GM12878 (cell line): ENCODE measurements at regions of chr1 and their contacts with region 1.

Region 1: GRCh38 chr1:234970731-234971476 is 157.7 kb downstream of the TOMM20 start:
- DNase-seq: no peak
- ATAC-seq: peak; percentile 72
- H3K4me3 ChIP-seq: no peak overlapping the region
- H3K27ac ChIP-seq: peak overlapping the region; percentile 95
- H3K4me1 ChIP-seq: peaks cover 60% of the 10 kb centered on the region
- H3K27me3 ChIP-seq: no peaks in the 10 kb centered on the region
- CTCF ChIP-seq: no peak
- EP300 ChIP-seq: peak in 1 of 2 experiments; percentile 87; a peak in 2 of 4 replicates
- POLR2A ChIP-seq: peak; percentile 31; the same call in 1 of the 2 replicates
- RAD21 ChIP-seq: 0 out of 2 replicates have a peak, but pooled peaks have one; percentile 4

Region 2: DNA sequence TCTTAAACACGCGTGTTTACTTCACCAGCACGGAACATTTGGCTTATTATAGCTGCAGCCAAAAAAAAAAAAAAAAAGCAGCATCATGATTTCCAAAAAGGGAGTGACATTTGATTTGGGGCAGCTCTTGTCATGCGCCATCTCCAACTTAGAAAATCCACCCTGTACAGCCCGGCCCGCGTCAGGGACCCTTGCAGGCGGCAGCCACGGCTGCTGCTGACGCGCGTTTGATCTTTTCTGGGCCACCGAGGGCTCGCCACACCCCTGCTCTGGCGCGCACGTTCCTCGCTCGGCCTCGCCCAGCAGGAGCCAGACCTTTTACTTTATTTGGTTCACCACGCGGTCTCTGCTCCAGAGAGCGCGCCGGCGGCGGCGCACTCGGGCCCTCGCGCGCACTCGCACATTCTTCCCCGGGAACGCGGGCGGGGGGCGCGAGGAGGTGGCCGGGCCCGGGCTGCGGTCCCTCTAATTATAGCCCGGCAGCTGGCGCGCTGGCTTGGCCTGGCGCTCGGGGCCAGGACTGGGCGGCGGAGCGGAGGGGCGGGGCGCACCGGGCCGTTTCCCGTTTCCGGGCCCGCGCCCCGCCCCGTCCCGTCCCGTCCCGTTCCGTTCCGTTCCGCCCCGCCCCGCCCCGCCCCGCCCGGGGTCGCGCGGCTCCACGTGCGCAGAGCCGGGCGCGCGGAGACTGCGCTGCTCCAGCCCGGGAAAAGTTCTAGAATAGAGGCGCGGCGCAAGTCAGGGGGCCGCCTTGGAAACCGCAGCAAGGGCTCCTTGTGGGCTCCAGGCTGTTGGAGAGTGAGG is 371.1 kb before region 1 on chr1:
- CTCF ChIA-PET with region 1: interaction called, 4 read pairs
- POLR2A ChIA-PET with region 1: interaction called, 3 read pairs
- RAD21 ChIA-PET with region 1: interaction called, 10 read pairs
- SMC1A ChIA-PET with region 1: interaction called, 11 read pairs
- in situ Hi-C with region 1: loop called (anchors 10 kb)
- intact Hi-C with region 1: loop called (anchors 5 kb)
- DNase-seq: no peak
- ATAC-seq: peak; percentile 76
- H3K4me3 ChIP-seq: peak overlapping the region; percentile 67; the same call in 1 of the 2 replicates
- H3K27ac ChIP-seq: peak overlapping the region; percentile 75
- H3K4me1 ChIP-seq: peaks cover 22% of the 10 kb centered on the region
- H3K27me3 ChIP-seq: no peaks in the 10 kb centered on the region
- CTCF ChIP-seq: 0 out of 6 replicates have a peak, but pooled peaks of 1 of the 3 experiments have one; percentile 5
- EP300 ChIP-seq: 0 out of 4 replicates have a peak, but pooled peaks of 1 of the 2 experiments have one; percentile 42
- POLR2A ChIP-seq: peak; percentile 70; the same call in 1 of the 2 replicates
- RAD21 ChIP-seq: no peak

Region 3: DNA sequence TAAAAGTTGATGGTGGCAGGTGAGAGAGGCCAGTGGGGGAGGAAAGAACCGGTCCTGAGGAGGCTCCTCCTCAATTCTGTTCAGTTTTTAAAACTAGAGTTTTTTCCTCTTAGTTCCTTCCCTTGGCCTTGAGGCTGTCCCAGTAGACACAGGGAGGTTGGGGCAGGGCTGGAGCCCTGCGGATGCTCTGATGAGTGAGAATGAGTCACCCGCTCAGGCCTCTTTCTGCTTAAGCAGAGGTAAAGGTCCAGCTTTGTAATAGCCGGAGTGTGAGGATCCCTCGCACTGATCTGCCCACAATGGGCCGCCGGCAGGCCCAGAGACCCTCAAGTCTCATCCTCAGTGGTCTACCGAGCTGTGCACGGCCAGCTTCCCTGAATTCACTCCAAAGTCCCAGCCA is 311.4 kb before region 1 on chr1:
- CTCF ChIA-PET with region 1: no interaction called
- POLR2A ChIA-PET with region 1: no interaction called
- RAD21 ChIA-PET with region 1: no interaction called
- SMC1A ChIA-PET with region 1: no interaction called
- in situ Hi-C with region 1: no loop called
- intact Hi-C with region 1: no loop called
- DNase-seq: no peak
- ATAC-seq: no peak
- H3K4me3 ChIP-seq: no peak overlapping the region
- H3K27ac ChIP-seq: no peak overlapping the region
- H3K4me1 ChIP-seq: peaks cover 11% of the 10 kb centered on the region
- H3K27me3 ChIP-seq: no peaks in the 10 kb centered on the region; a peak in 1 of 4 replicates
- CTCF ChIP-seq: no peak
- EP300 ChIP-seq: no peak
- POLR2A ChIP-seq: no peak
- RAD21 ChIP-seq: no peak

Region 4: DNA sequence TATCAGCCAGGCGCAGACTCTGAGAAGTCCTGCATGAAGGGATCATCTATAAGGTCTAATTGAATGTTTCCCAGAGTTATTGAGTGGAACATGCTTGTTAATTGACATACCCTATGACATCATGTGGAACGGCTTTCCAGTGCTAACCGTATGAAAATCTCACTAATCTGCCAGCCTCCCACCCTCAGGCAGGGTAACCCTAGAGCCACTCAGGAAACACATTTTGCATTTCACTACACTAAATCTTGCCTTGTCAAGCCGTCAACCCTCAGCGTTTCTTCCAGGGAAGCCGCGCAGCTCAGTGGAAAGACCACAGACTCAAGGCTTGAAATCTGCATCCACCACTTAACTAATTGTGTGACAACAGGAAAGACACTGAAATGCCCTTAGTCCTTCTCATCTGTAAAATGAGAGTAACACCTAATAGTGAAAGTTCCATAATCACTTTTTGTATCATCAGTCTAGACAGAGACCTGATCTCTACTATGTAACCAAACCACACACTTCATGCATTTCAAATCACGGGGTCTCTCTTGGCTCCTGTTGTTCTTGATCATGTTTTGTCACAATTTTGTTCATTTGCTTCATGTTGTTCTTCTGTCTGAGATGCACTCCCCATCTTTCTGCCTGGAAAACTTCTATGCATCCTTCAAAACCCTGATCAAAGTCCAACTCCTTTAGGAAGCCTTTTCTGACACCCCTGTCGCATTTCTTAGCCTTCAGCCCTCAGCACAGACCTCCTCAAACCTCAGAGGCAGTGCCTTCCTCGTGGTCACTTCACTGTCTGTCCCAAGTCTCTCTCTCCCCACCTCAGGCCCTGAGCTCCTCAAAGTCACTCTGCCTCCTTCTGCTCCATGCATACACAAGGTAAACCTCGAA is 88.8 kb before region 1 on chr1:
- CTCF ChIA-PET with region 1: interaction called, 3 read pairs
- POLR2A ChIA-PET with region 1: no interaction called
- RAD21 ChIA-PET with region 1: interaction called, 8 read pairs
- SMC1A ChIA-PET with region 1: interaction called, 8 read pairs
- in situ Hi-C with region 1: no loop called
- intact Hi-C with region 1: loop called (anchors 2 kb)
- DNase-seq: peak; percentile 83
- ATAC-seq: peak; percentile 88
- H3K4me3 ChIP-seq: peak overlapping the region; percentile 53
- H3K27ac ChIP-seq: peak overlapping the region; percentile 73
- H3K4me1 ChIP-seq: peaks cover 50% of the 10 kb centered on the region
- H3K27me3 ChIP-seq: no peaks in the 10 kb centered on the region
- CTCF ChIP-seq: no peak
- EP300 ChIP-seq: peak; percentile 90 to 94
- POLR2A ChIP-seq: no peak
- RAD21 ChIP-seq: no peak

Region 5: GRCh38 chr1:234987415-234988154 is 16.7 kb after region 1 on chr1:
- CTCF ChIA-PET with region 1: no interaction called
- POLR2A ChIA-PET with region 1: interaction called, 39 read pairs
- RAD21 ChIA-PET with region 1: interaction called, 50 read pairs
- SMC1A ChIA-PET with region 1: interaction called, 19 read pairs
- in situ Hi-C with region 1: no loop called
- intact Hi-C with region 1: no loop called
- DNase-seq: no peak
- ATAC-seq: peak; percentile 81
- H3K4me3 ChIP-seq: no peak overlapping the region
- H3K27ac ChIP-seq: peak overlapping the region; percentile 80
- H3K4me1 ChIP-seq: peaks cover 62% of the 10 kb centered on the region
- H3K27me3 ChIP-seq: no peaks in the 10 kb centered on the region
- CTCF ChIP-seq: no peak
- EP300 ChIP-seq: peak in 1 of 2 experiments; percentile 24; a peak in 1 of 4 replicates
- POLR2A ChIP-seq: no peak; the same call in 1 of the 2 replicates
- RAD21 ChIP-seq: no peak

Region 6: DNA sequence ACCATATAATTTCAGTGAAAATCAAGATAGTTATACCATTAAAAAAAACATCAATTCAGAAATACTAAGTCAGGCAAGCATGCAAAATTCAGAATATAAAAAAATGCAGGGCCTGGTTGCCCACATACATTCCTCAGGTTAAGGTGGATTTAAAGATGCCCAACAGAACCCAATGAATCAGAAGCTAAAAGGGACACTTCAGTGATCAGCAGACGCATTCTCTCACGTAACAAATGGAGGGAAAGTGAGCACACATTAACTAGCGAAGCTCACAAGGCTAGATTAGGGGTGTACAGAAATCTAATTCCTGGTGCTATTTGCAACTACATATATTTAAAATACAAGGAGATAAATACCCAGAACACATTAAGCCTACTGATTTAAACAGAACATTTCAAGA is 140.2 kb after region 1 on chr1:
- CTCF ChIA-PET with region 1: no interaction called
- POLR2A ChIA-PET with region 1: no interaction called
- RAD21 ChIA-PET with region 1: no interaction called
- SMC1A ChIA-PET with region 1: no interaction called
- in situ Hi-C with region 1: no loop called
- intact Hi-C with region 1: no loop called
- DNase-seq: no peak
- ATAC-seq: no peak
- H3K4me3 ChIP-seq: no peak overlapping the region
- H3K27ac ChIP-seq: no peak overlapping the region
- H3K4me1 ChIP-seq: peaks cover 4% of the 10 kb centered on the region; the same call in 1 of the 2 replicates
- H3K27me3 ChIP-seq: no peaks in the 10 kb centered on the region
- CTCF ChIP-seq: no peak
- EP300 ChIP-seq: no peak
- POLR2A ChIP-seq: no peak
- RAD21 ChIP-seq: no peak